ENCODE measurements at regions of chr4 and their contacts with region 1.

Region 1: DNA sequence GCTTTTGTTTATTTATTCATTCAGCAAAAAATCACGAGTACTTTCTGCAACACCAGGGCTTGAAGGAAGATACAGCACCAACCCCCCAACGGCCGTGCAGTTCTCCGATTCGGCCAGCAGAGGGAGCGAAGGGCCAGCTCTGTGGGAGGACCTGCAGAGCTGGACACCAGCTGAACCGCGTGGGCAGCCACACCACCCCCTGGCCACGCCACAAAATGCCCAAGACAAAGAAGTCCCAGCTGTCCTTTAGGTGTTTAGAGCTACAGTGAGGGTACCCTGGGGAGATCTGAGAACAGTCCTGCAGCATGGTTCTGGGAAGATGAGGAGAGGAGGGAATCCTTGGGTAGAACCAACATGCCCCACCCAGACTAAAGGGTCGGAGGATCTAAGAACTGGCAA is 83.1 kb downstream of the RELL1 start:
- DNase-seq: peak; percentile 61
- ATAC-seq: peak; percentile 99
- H3K4me3 ChIP-seq: no peak overlapping the region
- H3K27ac ChIP-seq: no peak overlapping the region
- H3K4me1 ChIP-seq: no peaks in the 10 kb centered on the region; the same call in 1 of the 2 replicates
- H3K27me3 ChIP-seq: no peaks in the 10 kb centered on the region
- CTCF ChIP-seq: peak; percentile 89
- POLR2A ChIP-seq: 0 out of 2 replicates have a peak, but pooled peaks have one; percentile 34
- RAD21 ChIP-seq: peak; percentile 93

Region 2: DNA sequence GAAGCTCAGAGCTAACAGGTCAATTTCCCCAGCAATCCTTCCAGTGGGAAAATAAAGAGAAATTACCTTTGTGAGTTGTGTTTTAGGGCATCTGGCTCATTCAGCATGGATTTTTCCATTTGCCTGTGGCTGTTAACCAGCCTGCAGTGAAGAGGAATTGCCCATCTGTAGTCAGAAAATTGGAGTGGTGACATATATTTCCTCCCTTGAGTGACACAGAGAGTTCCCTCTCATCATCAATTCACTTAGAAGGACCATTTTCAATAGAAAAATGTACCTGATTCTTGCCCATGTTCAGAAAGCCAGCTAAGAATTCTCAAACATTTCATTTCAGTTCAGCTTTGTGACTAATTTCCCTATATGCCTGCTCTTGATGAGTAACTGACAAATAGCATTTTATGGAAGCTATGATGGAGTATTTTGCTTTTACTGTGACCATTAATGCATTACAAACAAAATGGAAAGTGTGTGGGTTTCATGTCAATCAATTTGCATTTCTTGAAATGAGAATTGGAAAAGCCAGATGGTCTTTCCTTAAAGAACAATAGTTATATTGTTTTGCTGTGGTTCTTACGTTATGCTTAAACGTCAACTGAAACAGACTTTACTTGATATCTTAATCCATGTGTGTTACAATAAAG is 202.7 kb before region 1 on chr4:
- CTCF ChIA-PET with region 1: no interaction called
- POLR2A ChIA-PET with region 1: no interaction called
- dilution Hi-C with region 1: no loop called
- in situ Hi-C with region 1: no loop called
- intact Hi-C with region 1: no loop called
- DNase-seq: no peak
- ATAC-seq: no peak
- H3K4me3 ChIP-seq: no peak overlapping the region
- H3K27ac ChIP-seq: no peak overlapping the region
- H3K4me1 ChIP-seq: no peaks in the 10 kb centered on the region
- H3K27me3 ChIP-seq: no peaks in the 10 kb centered on the region
- CTCF ChIP-seq: no peak
- POLR2A ChIP-seq: no peak
- RAD21 ChIP-seq: no peak

Region 3: DNA sequence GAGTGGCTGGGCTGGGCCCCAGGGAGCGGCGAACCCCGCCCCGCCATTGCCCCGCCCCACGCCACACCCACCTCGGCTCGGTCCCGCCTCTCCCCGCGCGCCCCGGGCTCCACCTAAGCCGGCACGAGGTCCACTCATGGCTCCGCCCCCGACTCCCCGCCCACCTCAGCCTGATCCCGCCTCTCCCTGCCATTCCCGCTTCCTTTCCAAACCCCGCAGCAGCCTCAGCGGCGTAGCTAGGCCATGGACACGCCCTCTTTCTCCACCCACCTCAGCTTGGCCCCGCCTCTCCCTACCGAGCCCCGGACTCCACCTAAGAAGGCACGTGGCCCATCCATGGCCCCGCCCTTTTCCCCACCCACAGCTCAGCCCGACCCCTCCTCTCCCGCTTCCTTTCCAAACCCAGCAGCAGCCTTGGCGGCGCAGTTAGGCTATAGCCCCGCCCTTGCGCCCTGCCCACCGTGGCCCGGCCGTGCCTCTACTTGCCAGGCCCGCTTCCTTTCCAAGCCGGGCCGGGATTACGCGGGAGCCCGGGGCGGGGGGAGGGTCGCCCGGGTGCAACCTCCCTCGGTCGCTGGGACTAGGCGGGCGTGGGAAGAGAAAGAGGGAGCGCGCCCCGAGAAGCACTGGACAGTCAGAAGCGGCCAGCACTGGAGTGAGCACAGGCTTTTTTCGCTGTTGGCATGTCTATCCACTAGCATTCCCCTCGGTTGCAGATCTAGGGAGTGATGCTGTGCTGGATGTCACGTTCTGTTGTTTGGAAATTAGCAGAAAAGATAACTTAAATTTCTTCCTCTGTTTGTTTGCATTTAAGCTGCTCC is 83.5 kb after region 1 on chr4 and contains the start of gene RELL1:
- CTCF ChIA-PET with region 1: interaction called, 4 read pairs
- POLR2A ChIA-PET with region 1: no interaction called
- dilution Hi-C with region 1: no loop called
- in situ Hi-C with region 1: no loop called
- intact Hi-C with region 1: loop called (anchors 1 kb)
- DNase-seq: peak; percentile 99
- ATAC-seq: peak; percentile 92
- H3K4me3 ChIP-seq: peak within 1 kb of the TSS; percentile 86
- H3K27ac ChIP-seq: peak within 1 kb of the TSS; percentile 72
- H3K4me1 ChIP-seq: peaks cover 9% of the 10 kb centered on the region
- H3K27me3 ChIP-seq: no peaks in the 10 kb centered on the region
- CTCF ChIP-seq: no peak
- POLR2A ChIP-seq: no peak
- RAD21 ChIP-seq: 0 out of 2 replicates have a peak, but pooled peaks have one; percentile 9
- total RNA-seq, gene RELL1: 39.6 and 53.6 TPM in 2 replicates

Region 4: GRCh38 chr4:37793562-37793961 is 190.5 kb after region 1 on chr4:
- CTCF ChIA-PET with region 1: interaction called, 8 read pairs
- POLR2A ChIA-PET with region 1: no interaction called
- dilution Hi-C with region 1: no loop called
- in situ Hi-C with region 1: no loop called
- intact Hi-C with region 1: loop called (anchors 1 kb)
- DNase-seq: peak; percentile 7
- ATAC-seq: peak; percentile 81
- H3K4me3 ChIP-seq: no peak overlapping the region
- H3K27ac ChIP-seq: no peak overlapping the region
- H3K4me1 ChIP-seq: no peaks in the 10 kb centered on the region
- H3K27me3 ChIP-seq: peaks cover 10% of the 10 kb centered on the region
- CTCF ChIP-seq: peak; percentile 59
- POLR2A ChIP-seq: no peak
- RAD21 ChIP-seq: peak; percentile 74

Region 5: GRCh38 chr4:37802068-37802666 is 199.1 kb after region 1 on chr4:
- CTCF ChIA-PET with region 1: interaction called, 16 read pairs
- POLR2A ChIA-PET with region 1: no interaction called
- dilution Hi-C with region 1: no loop called
- in situ Hi-C with region 1: loop called (anchors 10 kb)
- intact Hi-C with region 1: loop called (anchors 1 kb)
- DNase-seq: peak; percentile 60
- ATAC-seq: peak; percentile 87
- H3K4me3 ChIP-seq: no peak overlapping the region
- H3K27ac ChIP-seq: no peak overlapping the region
- H3K4me1 ChIP-seq: no peaks in the 10 kb centered on the region
- H3K27me3 ChIP-seq: peaks cover 7% of the 10 kb centered on the region
- CTCF ChIP-seq: peak; percentile 73
- POLR2A ChIP-seq: no peak
- RAD21 ChIP-seq: peak; percentile 70

Region 6: DNA sequence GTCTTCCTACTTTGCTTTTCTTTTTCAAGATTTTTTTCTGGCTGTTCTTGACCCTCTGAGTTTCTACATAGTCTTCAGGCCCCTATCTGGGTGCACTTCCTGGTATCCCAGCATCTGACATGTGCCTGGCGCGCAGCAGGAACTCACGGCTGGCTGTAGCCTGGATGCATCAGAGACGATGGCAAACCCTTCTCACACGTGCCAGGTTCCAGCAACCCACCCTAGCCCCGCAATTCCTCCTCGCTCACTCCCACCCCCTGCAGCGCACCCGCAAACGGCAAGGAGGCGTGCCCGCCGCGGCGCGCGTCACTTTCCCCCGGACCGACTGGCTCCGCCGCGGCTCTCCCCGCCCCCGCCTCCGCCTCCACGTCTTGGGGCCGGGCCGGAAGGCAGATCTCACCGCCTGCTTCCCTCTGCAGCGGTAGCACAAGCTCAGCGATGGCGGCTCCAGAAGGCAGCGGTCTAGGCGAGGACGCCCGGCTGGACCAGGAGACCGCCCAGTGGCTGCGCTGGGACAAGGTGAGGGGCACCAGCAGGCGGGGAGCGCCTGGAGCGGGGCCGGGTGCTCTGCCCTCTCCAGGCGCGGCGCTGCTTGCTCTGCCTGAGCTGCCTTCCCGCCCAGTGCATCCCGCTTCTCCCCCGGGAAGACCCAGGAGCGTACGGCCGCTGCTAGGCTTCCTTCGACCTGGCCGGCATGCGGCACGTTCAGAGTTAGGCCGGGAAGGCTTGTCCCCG is 223.4 kb after region 1 on chr4 and contains the start of gene PGM2:
- CTCF ChIA-PET with region 1: interaction called, 4 read pairs
- POLR2A ChIA-PET with region 1: no interaction called
- dilution Hi-C with region 1: no loop called
- in situ Hi-C with region 1: no loop called
- intact Hi-C with region 1: loop called (anchors 1 kb)
- DNase-seq: peak; percentile 73
- ATAC-seq: peak; percentile 97
- H3K4me3 ChIP-seq: peak within 1 kb of the TSS; percentile 82
- H3K27ac ChIP-seq: peak within 1 kb of the TSS; percentile 61
- H3K4me1 ChIP-seq: peaks cover 2% of the 10 kb centered on the region
- H3K27me3 ChIP-seq: no peaks in the 10 kb centered on the region
- CTCF ChIP-seq: 0 out of 2 replicates have a peak, but pooled peaks have one; percentile 6
- POLR2A ChIP-seq: peak; percentile 69
- RAD21 ChIP-seq: no peak; the same call in 1 of the 2 replicates
- total RNA-seq, gene PGM2: 26.2 and 32.2 TPM in 2 replicates

Region 7: GRCh38 chr4:38034986-38035882 is 432.2 kb after region 1 on chr4:
- CTCF ChIA-PET with region 1: interaction called, 5 read pairs
- POLR2A ChIA-PET with region 1: no interaction called
- dilution Hi-C with region 1: no loop called
- in situ Hi-C with region 1: loop called (anchors 10 kb)
- intact Hi-C with region 1: loop called (anchors 1 kb)
- DNase-seq: peak; percentile 70
- ATAC-seq: peak; percentile 85
- H3K4me3 ChIP-seq: no peak overlapping the region
- H3K27ac ChIP-seq: no peak overlapping the region
- H3K4me1 ChIP-seq: peaks cover 1% of the 10 kb centered on the region; the same call in 1 of the 2 replicates
- H3K27me3 ChIP-seq: no peaks in the 10 kb centered on the region
- CTCF ChIP-seq: peak; percentile 75
- POLR2A ChIP-seq: no peak
- RAD21 ChIP-seq: peak; percentile 75

Measured in IMR-90 (cell line).